ENCODE measurements at regions of chr7 and their contacts with region 1.

Region 1: DNA sequence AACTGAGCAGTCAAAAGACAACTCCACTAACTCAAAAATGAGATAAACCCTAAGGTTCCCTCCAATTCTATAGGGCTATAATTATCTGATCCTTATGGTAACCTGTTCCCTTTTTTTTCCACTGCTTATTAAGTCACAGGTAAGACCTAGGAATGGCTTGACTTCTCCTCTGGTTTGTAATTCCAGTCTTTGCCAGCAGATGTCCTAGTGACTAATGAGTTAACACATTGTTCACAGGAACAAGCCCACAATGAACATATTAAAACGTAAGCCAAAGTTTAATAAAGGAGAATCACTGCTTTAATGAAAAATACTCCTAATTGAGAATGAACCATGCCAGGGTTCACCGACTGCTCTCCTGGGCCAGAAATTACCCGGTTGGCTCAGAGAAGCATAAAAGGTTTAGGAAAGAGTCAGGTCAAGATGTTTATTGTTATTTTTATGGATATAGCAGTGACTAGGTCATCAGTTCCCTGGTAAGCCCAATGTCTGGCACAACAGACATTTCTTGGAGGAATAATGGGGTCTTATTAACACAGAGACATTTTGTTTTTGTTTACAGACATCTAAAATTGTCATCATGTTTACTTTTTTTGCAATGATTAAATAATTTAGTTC is 120.1 kb downstream of the ELAPOR2 start:
- DNase-seq: no peak
- ATAC-seq: peak; percentile 64 to 74
- H3K4me3 ChIP-seq: no peak overlapping the region
- H3K27ac ChIP-seq: no peak overlapping the region
- H3K4me1 ChIP-seq: no peaks in the 10 kb centered on the region
- H3K27me3 ChIP-seq: no peaks in the 10 kb centered on the region

Region 2: GRCh38 chr7:86884152-86884551 is 55.2 kb before region 1 on chr7:
- intact Hi-C with region 1: no loop called
- DNase-seq: no peak
- ATAC-seq: no peak
- H3K4me3 ChIP-seq: no peak overlapping the region
- H3K27ac ChIP-seq: no peak overlapping the region
- H3K4me1 ChIP-seq: no peaks in the 10 kb centered on the region
- H3K27me3 ChIP-seq: no peaks in the 10 kb centered on the region

Region 3: DNA sequence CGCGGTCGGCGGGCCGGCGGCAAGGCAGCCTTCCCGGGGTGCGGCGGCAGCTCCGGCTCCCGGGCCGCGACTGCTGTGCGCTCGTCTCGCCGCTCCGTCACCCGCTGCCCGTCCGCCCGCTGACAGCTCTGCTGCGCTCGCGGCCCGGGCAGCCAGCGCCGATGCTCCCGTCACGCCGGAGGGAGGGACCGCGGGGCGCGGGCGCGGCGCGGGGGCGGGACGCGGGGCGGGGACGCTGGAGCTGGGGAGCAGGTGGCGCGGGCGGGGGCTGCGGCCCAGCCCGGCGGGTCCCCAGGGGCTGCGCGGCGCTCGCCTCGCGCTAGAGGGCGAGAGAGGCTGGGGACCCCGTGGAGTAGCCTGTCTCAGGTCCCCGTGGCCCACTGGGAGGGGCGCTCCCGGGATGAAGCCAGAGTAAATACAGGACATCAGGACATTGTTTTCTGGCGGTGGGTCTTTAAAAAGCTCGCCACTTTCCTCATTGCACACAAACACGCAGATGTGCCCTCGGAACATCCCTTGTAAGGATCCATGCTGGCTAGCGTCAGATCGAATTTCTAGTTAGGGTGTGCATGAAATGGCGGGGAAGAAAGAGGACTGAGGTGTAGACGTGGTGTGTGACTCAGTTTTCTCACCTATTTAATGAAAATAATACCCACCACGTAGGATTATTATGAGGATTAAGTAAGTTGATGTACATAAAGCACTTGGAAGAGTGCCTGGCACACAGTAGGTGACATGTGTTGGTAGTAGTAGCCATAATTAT is 120.4 kb after region 1 on chr7 and contains the start of gene ELAPOR2:
- intact Hi-C with region 1: loop called in 2 of 4 experiments (anchors 10 kb)
- DNase-seq: peak; percentile 80 to 93 (median 91)
- ATAC-seq: peak; percentile 99 to 100
- H3K4me3 ChIP-seq: peak within 1 kb of the TSS; percentile 93
- H3K27ac ChIP-seq: peak within 1 kb of the TSS; percentile 70
- H3K4me1 ChIP-seq: peaks cover 5% of the 10 kb centered on the region
- H3K27me3 ChIP-seq: no peaks in the 10 kb centered on the region
- total RNA-seq, gene ELAPOR2: 10.7 to 14.0 (median 12.6) TPM

Region 4: GRCh38 chr7:87148332-87148955 is 209.1 kb after region 1 on chr7:
- intact Hi-C with region 1: loop called in 2 of 4 experiments (anchors 5 kb)
- DNase-seq: no peak
- ATAC-seq: no peak
- H3K4me3 ChIP-seq: no peak overlapping the region
- H3K27ac ChIP-seq: no peak overlapping the region
- H3K4me1 ChIP-seq: no peaks in the 10 kb centered on the region
- H3K27me3 ChIP-seq: no peaks in the 10 kb centered on the region

Region 5: GRCh38 chr7:87231256-87231655 is 291.9 kb after region 1 on chr7:
- intact Hi-C with region 1: loop called in 1 of 4 experiments (anchors 10 kb)
- DNase-seq: peak; percentile 40 to 81 (median 65)
- ATAC-seq: peak; percentile 86 to 87
- H3K4me3 ChIP-seq: no peak overlapping the region
- H3K27ac ChIP-seq: no peak overlapping the region
- H3K4me1 ChIP-seq: peaks cover 5% of the 10 kb centered on the region
- H3K27me3 ChIP-seq: no peaks in the 10 kb centered on the region